ENCODE measurements at regions of chr2 and their contacts with region 1.

Region 1: GRCh38 chr2:73176881-73177644 is 25.3 kb upstream of the NOTO start:
- DNase-seq: peak; percentile 92
- ATAC-seq: peak; percentile 93
- H3K4me3 ChIP-seq: peak overlapping the region; percentile 51 to 76 (median 64)
- H3K4me3 Mint-ChIP-seq: peak overlapping the region; percentile 94
- H3K27ac ChIP-seq: no peak overlapping the region
- H3K27ac Mint-ChIP-seq: peak overlapping the region; percentile 41
- H3K4me1 ChIP-seq: peaks cover 24 to 28% of the 10 kb centered on the region in 2 donors
- H3K4me1 Mint-ChIP-seq: peaks cover 16% of the 10 kb centered on the region
- H3K27me3 ChIP-seq: peaks cover 0 to 58% (median 16%) of the 10 kb centered on the region in 4 experiments
- H3K27me3 Mint-ChIP-seq: peaks cover 59% of the 10 kb centered on the region
- CTCF ChIP-seq: peak; percentile 98

Region 2: GRCh38 chr2:71923887-71924533 is 1253.1 kb before region 1 on chr2:
- CTCF ChIA-PET with region 1: no interaction called
- POLR2A ChIA-PET with region 1: no interaction called
- intact Hi-C with region 1: loop called (anchors 10 kb)
- DNase-seq: peak; percentile 62
- ATAC-seq: no peak
- H3K4me3 ChIP-seq: no peak overlapping the region
- H3K4me3 Mint-ChIP-seq: no peak overlapping the region
- H3K27ac ChIP-seq: no peak overlapping the region
- H3K27ac Mint-ChIP-seq: no peak overlapping the region
- H3K4me1 ChIP-seq: no peaks in the 10 kb centered on the region
- H3K4me1 Mint-ChIP-seq: no peaks in the 10 kb centered on the region
- H3K27me3 ChIP-seq: no peaks in the 10 kb centered on the region
- H3K27me3 Mint-ChIP-seq: no peaks in the 10 kb centered on the region
- CTCF ChIP-seq: peak; percentile 83

Region 3: DNA sequence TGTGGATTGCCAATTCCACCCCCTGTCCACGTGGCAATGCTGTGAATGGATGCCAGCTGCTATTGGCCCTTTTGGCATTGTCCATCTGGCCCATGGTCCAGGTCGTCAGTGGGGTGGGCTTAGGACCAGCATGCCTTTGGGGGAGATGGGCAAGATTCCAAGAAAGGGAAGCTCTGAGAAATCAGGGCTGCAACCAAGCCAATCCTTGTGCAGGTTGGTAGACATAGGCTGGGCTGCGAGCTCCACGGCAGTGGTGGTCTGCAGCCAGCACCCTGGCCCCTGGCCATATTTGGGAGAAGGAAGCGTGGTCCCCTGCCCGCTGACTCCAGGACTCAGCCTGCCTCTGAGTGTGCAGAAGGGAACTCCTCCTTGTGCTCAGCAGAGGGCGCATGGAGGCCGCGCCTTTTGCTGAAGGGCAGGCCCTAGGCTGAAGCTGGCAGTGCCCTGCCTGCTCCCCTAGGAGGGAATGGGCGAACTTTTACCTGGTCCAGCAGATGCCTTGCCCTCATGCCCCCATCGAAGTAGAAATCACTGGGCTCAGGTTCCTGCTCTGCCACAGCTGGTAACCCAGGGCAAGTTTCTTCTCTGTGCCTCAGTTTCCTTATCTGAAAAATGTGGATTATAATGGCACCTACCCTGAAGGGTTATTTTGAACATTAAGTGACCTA is 284.4 kb before region 1 on chr2:
- CTCF ChIA-PET with region 1: interaction called, 45 read pairs
- POLR2A ChIA-PET with region 1: no interaction called
- intact Hi-C with region 1: loop called (anchors 1 kb)
- DNase-seq: peak; percentile 64
- ATAC-seq: peak; percentile 83
- H3K4me3 ChIP-seq: no peak overlapping the region
- H3K4me3 Mint-ChIP-seq: no peak overlapping the region
- H3K27ac ChIP-seq: no peak overlapping the region
- H3K27ac Mint-ChIP-seq: no peak overlapping the region
- H3K4me1 ChIP-seq: peaks cover 9 to 13% of the 10 kb centered on the region in 2 donors
- H3K4me1 Mint-ChIP-seq: peaks cover 9% of the 10 kb centered on the region
- H3K27me3 ChIP-seq: peaks cover 0 to 83% (median 26%) of the 10 kb centered on the region in 4 experiments
- H3K27me3 Mint-ChIP-seq: peaks cover 53% of the 10 kb centered on the region
- CTCF ChIP-seq: peak; percentile 66

Region 4: DNA sequence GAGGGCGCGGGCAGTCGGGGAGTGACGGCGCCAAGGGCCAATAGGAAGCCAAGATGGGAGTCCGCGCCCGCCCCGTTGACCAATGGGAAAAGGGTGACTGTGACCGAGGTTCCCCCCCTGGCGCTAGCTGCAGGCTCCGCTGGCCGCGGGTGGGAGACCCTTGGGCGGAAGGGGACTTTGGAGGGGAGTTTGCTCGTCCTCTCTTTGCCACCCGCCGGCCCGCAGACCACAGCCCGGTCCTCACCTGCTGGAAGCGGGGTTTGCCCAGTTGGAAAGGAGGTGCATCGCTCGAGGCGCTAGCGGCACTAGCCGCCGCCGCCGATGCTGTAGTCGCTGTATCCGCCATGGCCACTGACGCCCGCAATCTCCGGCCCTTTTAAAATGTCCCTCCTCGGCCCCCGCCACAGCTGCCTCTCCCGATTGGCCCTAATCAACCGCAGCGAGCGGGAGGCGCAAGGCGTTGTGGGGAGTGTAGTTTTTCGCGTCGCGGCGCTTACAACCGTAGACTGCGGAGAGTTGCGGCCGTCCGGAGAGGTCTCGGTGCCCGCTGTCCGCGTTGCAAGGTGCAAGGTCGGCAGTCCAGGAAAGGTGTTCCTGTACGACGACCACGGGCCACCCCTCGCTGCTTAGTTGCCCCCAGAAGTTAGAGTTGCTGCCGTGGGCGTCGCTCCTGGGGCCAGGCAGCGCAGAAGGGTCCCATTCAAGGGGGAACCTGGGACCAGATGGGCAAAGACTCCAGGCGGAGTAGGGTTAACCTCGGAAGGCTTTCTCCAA is 105.5 kb before region 1 on chr2 and contains the start of gene SFXN5:
- CTCF ChIA-PET with region 1: interaction called, 14 read pairs
- POLR2A ChIA-PET with region 1: no interaction called
- intact Hi-C with region 1: loop called (anchors 1 kb)
- DNase-seq: peak; percentile 98
- ATAC-seq: peak; percentile 90
- H3K4me3 ChIP-seq: peak within 1 kb of the TSS; percentile 51 to 99 (median 86)
- H3K4me3 Mint-ChIP-seq: peak within 1 kb of the TSS; percentile 93
- H3K27ac ChIP-seq: peak within 1 kb of the TSS; percentile 77 to 84
- H3K27ac Mint-ChIP-seq: peak within 1 kb of the TSS; percentile 95
- H3K4me1 ChIP-seq: peaks cover 6 to 17% of the 10 kb centered on the region in 2 donors
- H3K4me1 Mint-ChIP-seq: peaks cover 24% of the 10 kb centered on the region
- H3K27me3 ChIP-seq: no peaks in the 10 kb centered on the region
- H3K27me3 Mint-ChIP-seq: no peaks in the 10 kb centered on the region
- CTCF ChIP-seq: no peak
- total RNA-seq, gene SFXN5: 16.9 and 17.8 TPM in 2 replicates

Region 5: GRCh38 chr2:73112913-73113633 is 64.0 kb before region 1 on chr2 and contains the start of gene RAB11FIP5:
- CTCF ChIA-PET with region 1: interaction called, 23 read pairs
- POLR2A ChIA-PET with region 1: no interaction called
- intact Hi-C with region 1: loop called (anchors 2 kb)
- DNase-seq: peak; percentile 83
- ATAC-seq: peak; percentile 91
- H3K4me3 ChIP-seq: peak within 1 kb of the TSS; percentile 15 to 89 (median 74)
- H3K4me3 Mint-ChIP-seq: peak within 1 kb of the TSS; percentile 83
- H3K27ac ChIP-seq: peak within 1 kb of the TSS in 1 of 2 donors; percentile 53
- H3K27ac Mint-ChIP-seq: peak within 1 kb of the TSS; percentile 67
- H3K4me1 ChIP-seq: peaks cover 17% of the 10 kb centered on the region in 2 donors
- H3K4me1 Mint-ChIP-seq: peaks cover 8% of the 10 kb centered on the region
- H3K27me3 ChIP-seq: peaks cover 0 to 23% (median 8%) of the 10 kb centered on the region in 4 experiments
- H3K27me3 Mint-ChIP-seq: peaks cover 3% of the 10 kb centered on the region
- CTCF ChIP-seq: no peak
- total RNA-seq, gene RAB11FIP5: 4.6 and 5.1 TPM in 2 replicates

Region 6: GRCh38 chr2:73187549-73187948 is 10.5 kb after region 1 on chr2:
- CTCF ChIA-PET with region 1: interaction called, 27 read pairs
- POLR2A ChIA-PET with region 1: no interaction called
- intact Hi-C with region 1: no loop called
- DNase-seq: no peak
- ATAC-seq: no peak
- H3K4me3 ChIP-seq: no peak overlapping the region
- H3K4me3 Mint-ChIP-seq: no peak overlapping the region
- H3K27ac ChIP-seq: no peak overlapping the region
- H3K27ac Mint-ChIP-seq: no peak overlapping the region
- H3K4me1 ChIP-seq: no peaks in the 10 kb centered on the region
- H3K4me1 Mint-ChIP-seq: no peaks in the 10 kb centered on the region
- H3K27me3 ChIP-seq: peaks cover 0 to 20% (median 0%) of the 10 kb centered on the region in 4 experiments
- H3K27me3 Mint-ChIP-seq: peaks cover 29% of the 10 kb centered on the region
- CTCF ChIP-seq: no peak

Measured in B cell (primary cell).